ENCODE measurements at regions of chr21 and their contacts with region 1.

Region 1: DNA sequence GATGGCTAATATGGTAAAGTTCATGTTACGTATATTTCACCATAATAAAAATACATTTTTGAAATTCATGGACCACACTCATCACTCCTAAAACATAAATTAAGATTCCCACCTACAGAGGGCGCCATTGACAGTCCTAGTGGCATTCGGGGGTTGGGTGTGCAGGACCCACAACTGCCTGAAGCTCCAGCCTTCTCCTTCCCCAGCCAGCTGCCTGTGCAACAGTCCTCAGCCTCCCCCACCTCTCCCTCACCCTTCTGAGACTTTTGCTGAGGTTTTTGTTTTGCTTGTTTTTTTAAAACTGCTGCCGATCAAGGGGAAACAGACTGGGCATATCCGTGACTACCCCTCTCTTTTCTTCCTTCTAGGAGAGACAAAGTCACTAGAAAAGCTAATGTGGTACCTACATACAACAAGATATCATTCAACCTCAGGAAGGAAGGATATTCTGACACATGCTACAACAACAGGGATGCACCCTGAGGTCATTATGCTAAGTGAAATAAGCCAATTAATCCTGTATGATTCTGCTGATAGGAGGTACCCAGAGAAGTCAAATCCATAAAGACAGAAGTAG is 9.2 kb upstream of the EVA1C start:
- DNase-seq: no peak
- H3K4me3 ChIP-seq: no peak overlapping the region
- H3K27me3 ChIP-seq: no peaks in the 10 kb centered on the region; the same call in 1 of the 2 replicates
- CTCF ChIP-seq: peak; percentile 69

Region 2: GRCh38 chr21:32392880-32393676 is 10.2 kb before region 1 on chr21 and contains the start of gene URB1:
- CTCF ChIA-PET with region 1: interaction called, 11 read pairs
- POLR2A ChIA-PET with region 1: interaction called, 4 read pairs
- DNase-seq: no peak
- H3K4me3 ChIP-seq: peak within 1 kb of the TSS; percentile 58
- H3K27me3 ChIP-seq: no peaks in the 10 kb centered on the region; the same call in 1 of the 2 replicates
- CTCF ChIP-seq: 0 out of 2 replicates have a peak, but pooled peaks have one; percentile 2
- polyA plus RNA-seq, gene URB1: 6.5 and 8.8 TPM in 2 replicates

Region 3: DNA sequence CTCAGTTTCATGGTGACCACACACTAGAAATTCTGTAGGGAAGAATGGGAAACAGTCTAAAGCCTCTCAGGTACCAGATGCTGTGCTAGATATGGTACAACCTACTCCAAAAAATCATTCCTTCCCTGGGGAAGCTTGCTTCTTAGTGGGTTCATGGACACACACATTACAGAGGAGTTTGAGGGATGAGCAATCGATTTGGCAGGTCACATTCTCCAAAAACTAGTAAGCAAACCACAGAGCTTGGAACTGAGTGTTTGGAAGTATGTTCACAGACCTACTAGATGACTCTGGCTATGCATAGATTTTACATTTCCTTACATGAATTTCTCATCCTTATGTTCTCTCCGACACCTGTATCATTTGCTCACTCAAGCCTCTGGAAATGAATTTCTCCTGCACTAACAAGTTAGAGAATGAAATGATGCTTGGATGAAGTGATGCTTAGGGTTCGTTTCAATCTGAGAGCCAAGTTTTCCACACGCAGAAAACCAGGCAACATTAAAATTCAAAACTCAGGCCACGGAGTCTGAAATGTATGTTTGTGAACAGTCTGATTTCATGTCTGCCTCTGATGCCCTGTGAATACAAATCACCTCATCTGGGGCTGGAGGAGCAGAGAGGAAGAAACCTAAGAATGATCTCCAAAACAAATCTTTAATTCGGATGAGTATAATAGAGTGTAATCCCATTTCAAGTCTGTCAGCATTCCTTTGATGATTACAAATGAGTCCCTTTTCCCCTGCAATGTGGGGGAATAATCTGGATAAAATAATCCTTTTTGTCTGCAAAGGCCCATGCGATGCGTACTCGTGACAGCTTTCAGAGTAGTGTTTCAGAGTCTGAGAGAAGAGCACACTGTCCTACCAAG is 20.3 kb after region 1 on chr21:
- CTCF ChIA-PET with region 1: interaction called, 3 read pairs
- POLR2A ChIA-PET with region 1: interaction called, 17 read pairs
- DNase-seq: peak; percentile 66
- H3K4me3 ChIP-seq: no peak overlapping the region
- H3K27me3 ChIP-seq: no peaks in the 10 kb centered on the region
- CTCF ChIP-seq: no peak

Region 4: DNA sequence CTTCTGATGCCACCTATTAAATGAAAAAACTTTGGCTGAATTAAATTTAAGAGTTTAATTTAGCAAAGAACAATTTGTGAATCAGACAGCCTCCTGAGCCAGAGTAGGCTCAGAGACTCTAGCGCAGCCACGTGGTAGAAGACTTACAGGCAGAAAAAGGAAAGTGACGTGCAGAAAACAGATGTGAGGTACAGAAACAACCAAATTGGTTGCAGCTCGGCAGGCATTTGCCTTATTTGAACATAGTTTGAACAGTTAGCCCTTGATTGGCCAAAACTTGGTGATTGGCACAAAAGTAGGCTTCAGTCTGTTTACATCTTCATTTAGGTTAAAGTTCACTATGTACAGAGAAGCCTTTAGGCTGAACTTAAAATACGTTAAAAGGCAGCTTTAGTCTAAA is 159.1 kb after region 1 on chr21:
- CTCF ChIA-PET with region 1: interaction called, 75 read pairs
- POLR2A ChIA-PET with region 1: no interaction called
- DNase-seq: peak; percentile 57
- H3K4me3 ChIP-seq: no peak overlapping the region
- H3K27me3 ChIP-seq: no peaks in the 10 kb centered on the region
- CTCF ChIP-seq: peak; percentile 66

Region 5: DNA sequence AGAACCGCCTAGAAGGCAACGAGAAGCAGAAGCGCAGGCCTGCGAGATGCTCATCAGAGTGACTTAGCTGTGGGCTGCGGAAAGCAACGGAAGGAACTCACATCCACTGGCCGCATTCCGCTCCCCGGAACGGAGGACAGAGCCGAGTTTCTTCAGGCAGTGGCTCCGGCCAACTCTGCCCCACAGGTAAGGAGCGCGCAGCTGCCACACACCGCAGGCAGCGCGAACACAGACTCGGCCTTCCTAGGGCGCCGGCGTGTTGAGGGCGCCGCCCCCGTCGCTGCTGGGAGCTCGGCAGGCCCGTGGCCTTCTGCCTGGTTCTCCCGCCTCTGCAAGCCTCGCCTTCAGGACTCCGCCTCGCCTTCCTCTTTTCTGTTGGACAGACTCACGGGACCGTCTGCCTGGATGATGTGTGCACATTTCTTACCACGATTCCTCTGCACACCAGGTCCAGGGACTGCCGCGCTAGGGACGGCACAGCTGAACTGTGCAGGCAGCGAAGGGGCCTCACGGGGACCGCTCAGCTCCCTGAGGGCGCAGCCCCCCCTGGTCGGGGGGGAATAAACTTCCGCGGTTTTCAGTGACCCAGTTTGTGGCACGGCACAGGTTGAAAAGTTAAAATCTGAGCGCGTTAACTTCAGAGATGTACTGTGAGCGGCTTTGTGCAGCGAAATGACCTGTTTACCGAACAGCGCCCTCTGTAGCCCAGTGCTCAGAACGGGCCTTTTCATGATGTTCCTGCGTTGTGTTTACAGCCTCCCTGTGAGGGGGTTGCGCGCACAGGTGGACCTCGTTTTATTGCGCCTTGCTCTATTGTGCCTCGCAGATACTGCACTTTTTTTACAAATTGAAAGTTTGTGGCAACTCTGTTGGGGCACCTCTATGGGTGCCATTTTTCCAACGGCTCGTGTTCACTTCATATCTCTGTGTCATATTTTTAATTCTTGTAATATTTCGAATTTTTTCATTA is 166.3 kb after region 1 on chr21:
- CTCF ChIA-PET with region 1: interaction called, 75 read pairs
- POLR2A ChIA-PET with region 1: no interaction called
- DNase-seq: no peak
- H3K4me3 ChIP-seq: peak overlapping the region; percentile 55
- H3K27me3 ChIP-seq: no peaks in the 10 kb centered on the region; the same call in 1 of the 2 replicates
- CTCF ChIP-seq: peak; percentile 91

Region 6: DNA sequence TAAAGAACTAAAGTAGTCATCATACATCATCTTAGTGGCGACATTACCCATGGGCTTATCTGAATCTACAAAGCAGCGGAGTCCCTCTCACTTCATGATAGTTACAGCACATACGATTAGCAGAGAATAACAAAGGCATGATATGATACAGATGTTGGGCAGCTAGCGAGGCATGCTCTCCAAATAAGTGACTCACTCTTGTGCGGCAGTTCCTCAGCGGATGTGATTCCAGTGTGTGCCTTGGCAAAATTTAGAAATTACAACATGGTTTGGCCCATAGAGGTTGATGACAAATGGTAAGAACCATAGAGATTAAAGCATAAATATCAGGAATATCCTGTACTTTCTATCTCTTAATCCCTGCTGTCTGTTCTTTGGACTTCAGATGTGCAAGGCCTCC is 416.4 kb after region 1 on chr21:
- CTCF ChIA-PET with region 1: no interaction called
- POLR2A ChIA-PET with region 1: no interaction called
- DNase-seq: peak; percentile 74
- H3K4me3 ChIP-seq: no peak overlapping the region
- H3K27me3 ChIP-seq: no peaks in the 10 kb centered on the region
- CTCF ChIP-seq: no peak